ENCODE measurements at regions of chr3 and their contacts with region 1.

Region 1: DNA sequence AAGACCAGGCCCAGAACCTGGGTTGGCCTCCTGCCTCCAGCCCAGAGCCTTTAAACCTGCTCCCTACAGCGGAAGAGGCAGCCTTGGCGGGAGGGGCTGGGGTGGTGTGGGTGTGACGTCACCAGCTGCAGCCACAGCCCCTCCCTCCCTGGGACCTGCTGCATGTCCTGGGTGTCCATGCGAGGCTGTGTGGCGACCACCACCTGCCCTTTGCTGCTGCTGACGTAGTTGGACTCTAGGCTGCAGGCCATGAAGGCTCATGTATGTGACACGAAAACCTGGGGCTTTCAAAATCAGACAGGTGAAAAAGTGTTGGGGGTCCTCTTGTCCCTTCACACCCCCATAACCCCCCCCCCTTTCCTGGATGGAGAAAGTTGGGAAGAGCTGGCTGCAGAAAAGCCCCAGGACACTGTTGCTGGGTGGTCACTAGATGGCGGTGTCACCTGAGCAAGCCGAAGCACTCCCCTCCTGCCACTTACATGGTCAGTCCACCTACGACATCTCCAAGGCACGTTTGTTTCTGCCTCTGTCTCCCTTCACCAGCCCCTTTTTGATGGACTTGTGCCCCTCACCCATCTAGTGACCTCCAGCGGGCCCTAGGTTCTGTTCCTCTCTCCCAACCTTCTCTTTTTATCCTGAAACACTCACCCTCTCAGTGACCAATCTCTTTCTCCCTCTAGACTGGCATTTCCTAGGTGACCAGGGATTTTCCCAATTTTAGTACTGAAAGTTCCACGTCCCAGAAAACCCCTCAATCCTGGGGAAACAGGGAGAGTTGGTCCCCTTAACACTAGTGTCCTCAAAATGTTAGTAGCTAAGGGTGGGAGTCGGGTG is 35.2 kb downstream of the SLC6A20 start:
- DNase-seq: peak; percentile 48
- H3K4me3 ChIP-seq: no peak overlapping the region
- H3K27ac ChIP-seq: no peak overlapping the region
- H3K4me1 ChIP-seq: no peaks in the 10 kb centered on the region
- H3K27me3 ChIP-seq: no peaks in the 10 kb centered on the region
- CTCF ChIP-seq: peak; percentile 66 to 95
- POLR2A ChIP-seq: no peak

Region 2: DNA sequence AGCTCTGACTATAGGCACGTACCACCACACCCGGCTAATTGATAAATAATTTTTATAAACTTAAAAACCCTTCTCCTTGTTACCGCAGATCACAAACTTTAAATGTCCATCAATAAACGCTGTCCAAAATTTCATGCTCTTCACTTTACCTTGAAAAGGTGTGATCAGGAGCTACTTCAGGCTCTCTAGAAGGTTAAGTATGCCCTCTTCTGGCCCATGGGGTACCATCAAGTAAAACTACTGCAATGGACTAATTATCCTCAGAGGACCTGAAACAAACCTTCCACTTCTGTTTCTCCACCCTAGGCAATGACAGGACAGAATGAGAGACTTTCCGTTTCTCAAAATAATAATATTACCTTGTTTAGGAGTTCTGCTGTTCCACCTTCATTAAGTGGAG is 71.6 kb after region 1 on chr3:
- CTCF ChIA-PET with region 1: interaction called, 39 read pairs
- POLR2A ChIA-PET with region 1: no interaction called
- dilution Hi-C with region 1: no loop called
- intact Hi-C with region 1: loop called (anchors 1 kb)
- DNase-seq: no peak
- H3K4me3 ChIP-seq: no peak overlapping the region
- H3K27ac ChIP-seq: no peak overlapping the region
- H3K4me1 ChIP-seq: no peaks in the 10 kb centered on the region
- H3K27me3 ChIP-seq: no peaks in the 10 kb centered on the region
- CTCF ChIP-seq: peak in 1 of 2 donors; percentile 12
- POLR2A ChIP-seq: no peak

Region 3: GRCh38 chr3:45841757-45842491 is 80.8 kb after region 1 on chr3 and contains the start of gene LZTFL1:
- CTCF ChIA-PET with region 1: no interaction called
- POLR2A ChIA-PET with region 1: no interaction called
- dilution Hi-C with region 1: no loop called
- intact Hi-C with region 1: loop called (anchors 2 kb)
- DNase-seq: peak; percentile 95
- H3K4me3 ChIP-seq: peak within 1 kb of the TSS; percentile 27 to 79 (median 69)
- H3K27ac ChIP-seq: peak within 1 kb of the TSS; percentile 46
- H3K4me1 ChIP-seq: peaks cover 5% of the 10 kb centered on the region
- H3K27me3 ChIP-seq: peaks cover 3 to 8% of the 10 kb centered on the region in 2 experiments
- CTCF ChIP-seq: no peak
- POLR2A ChIP-seq: peak; percentile 62
- total RNA-seq, gene LZTFL1: 15.1 and 18.2 TPM in 2 replicates

Region 4: GRCh38 chr3:45906681-45907407 is 145.7 kb after region 1 on chr3:
- CTCF ChIA-PET with region 1: interaction called, 22 read pairs
- POLR2A ChIA-PET with region 1: no interaction called
- dilution Hi-C with region 1: no loop called
- intact Hi-C with region 1: loop called (anchors 1 kb)
- DNase-seq: peak; percentile 24
- H3K4me3 ChIP-seq: no peak overlapping the region
- H3K27ac ChIP-seq: no peak overlapping the region
- H3K4me1 ChIP-seq: no peaks in the 10 kb centered on the region
- H3K27me3 ChIP-seq: no peaks in the 10 kb centered on the region
- CTCF ChIP-seq: peak; percentile 37 to 70
- POLR2A ChIP-seq: no peak

Region 5: DNA sequence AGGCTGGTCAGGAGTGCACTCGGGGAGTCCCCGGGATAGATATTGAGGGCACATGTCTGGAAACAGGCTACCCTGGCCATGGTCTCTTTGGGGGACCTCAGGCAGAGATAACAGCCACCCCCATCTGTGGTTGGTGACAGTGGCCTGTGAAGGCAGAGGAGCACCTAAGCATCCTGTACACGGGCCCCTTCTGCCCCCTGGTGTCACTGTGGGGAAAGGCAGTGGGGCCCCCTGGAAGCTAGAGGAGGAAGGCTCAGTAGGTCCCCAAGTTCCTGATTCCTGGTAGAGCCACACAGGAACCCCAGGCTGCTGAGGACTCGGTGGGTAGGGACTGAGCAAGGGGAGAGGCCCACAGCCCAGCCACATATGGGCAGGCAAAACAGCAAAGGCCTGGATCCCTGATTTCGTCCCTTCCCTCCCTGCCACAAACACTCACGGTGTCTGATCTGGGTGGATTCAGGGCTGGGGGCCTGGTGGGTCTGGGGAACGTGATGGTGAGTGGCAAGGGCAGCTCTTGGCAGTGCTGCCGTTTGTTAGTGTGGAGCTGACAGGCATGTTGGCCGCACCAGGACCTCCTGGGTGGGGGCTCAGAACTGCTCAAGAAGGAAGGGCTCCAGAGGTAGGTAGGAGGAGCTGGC is 168.1 kb after region 1 on chr3:
- CTCF ChIA-PET with region 1: interaction called, 52 read pairs
- POLR2A ChIA-PET with region 1: no interaction called
- dilution Hi-C with region 1: no loop called
- intact Hi-C with region 1: loop called (anchors 1 kb)
- DNase-seq: peak; percentile 12
- H3K4me3 ChIP-seq: no peak overlapping the region
- H3K27ac ChIP-seq: no peak overlapping the region
- H3K4me1 ChIP-seq: no peaks in the 10 kb centered on the region
- H3K27me3 ChIP-seq: no peaks in the 10 kb centered on the region
- CTCF ChIP-seq: peak; percentile 54 to 79
- POLR2A ChIP-seq: no peak